Activated CD8-positive, alpha-beta T cell treated with anti-CD3 and anti-CD28 coated beads for 36 hours (primary cell): ENCODE measurements at regions of chr14 and their contacts with region 1.

Region 1: DNA sequence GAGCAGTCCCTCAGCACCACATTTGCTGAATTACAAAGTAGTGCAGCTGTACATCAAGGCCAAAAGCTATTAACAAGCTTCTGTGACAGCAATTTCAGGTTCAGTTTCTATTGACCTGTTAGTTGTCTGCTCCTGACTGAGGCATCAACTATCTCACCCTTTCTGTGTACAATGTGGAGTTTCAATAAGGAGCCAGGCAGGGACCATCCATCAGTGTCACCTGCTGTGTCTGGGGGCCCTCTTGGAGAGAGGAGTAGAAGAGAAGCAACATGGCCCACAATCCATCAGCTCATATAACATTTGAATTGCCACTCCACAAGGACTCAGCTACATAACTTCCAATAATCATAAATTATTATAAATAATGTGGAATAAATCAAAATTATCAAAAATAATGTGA is 72.3 kb upstream of the CCDC196 start:
- DNase-seq: no peak
- ATAC-seq: no peak
- H3K4me3 Mint-ChIP-seq: no peak overlapping the region
- H3K27ac Mint-ChIP-seq: no peak overlapping the region
- H3K4me1 Mint-ChIP-seq: no peaks in the 10 kb centered on the region
- H3K27me3 Mint-ChIP-seq: no peaks in the 10 kb centered on the region
- CTCF ChIP-seq: no peak

Region 2: GRCh38 chr14:66403183-66403582 is 10.7 kb before region 1 on chr14:
- CTCF ChIA-PET with region 1: interaction called, 11 read pairs
- POLR2A ChIA-PET with region 1: no interaction called
- intact Hi-C with region 1: no loop called
- DNase-seq: no peak
- ATAC-seq: no peak
- H3K4me3 Mint-ChIP-seq: no peak overlapping the region
- H3K27ac Mint-ChIP-seq: no peak overlapping the region
- H3K4me1 Mint-ChIP-seq: peaks cover 10% of the 10 kb centered on the region
- H3K27me3 Mint-ChIP-seq: no peaks in the 10 kb centered on the region
- CTCF ChIP-seq: no peak